Activated CD8-positive, alpha-beta memory T cell treated with anti-CD3 and anti-CD28 coated beads, Interleukin-2, amount 10 ng/mL, durations not matched to agents 7 days and 5 days (primary cell): ENCODE measurements at regions of chr11 and their contacts with region 1.

Region 1: DNA sequence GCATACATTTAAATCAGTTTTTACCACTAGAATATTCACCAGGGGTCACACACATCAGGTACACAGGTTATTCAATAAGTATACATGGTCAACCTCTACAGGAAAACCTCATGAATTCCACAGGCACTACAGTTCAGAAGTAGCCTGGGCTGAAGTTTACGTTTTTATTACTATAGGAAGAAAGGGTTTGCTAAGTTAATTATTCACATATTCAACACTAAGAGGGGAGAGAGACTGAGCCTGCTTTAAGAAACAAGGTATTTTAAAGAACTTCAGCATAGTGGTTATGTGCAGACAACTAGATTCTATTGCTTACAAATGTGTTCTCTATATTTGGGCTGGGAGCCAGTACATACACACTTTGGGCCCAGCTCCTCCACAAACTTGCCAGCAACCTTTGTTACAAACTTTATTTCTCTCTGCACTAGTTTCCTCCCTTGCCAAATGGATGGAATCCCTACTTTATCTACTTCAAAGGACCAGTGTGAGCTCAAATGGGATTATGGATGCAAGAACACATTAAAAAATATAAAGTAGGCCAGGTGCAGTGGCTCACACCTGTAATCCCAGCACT is 31.9 kb downstream of the IL18BP start:
- DNase-seq: no peak
- ATAC-seq: no peak
- H3K4me3 Mint-ChIP-seq: no peak overlapping the region
- H3K27ac Mint-ChIP-seq: no peak overlapping the region
- H3K4me1 Mint-ChIP-seq: peaks cover 11% of the 10 kb centered on the region
- H3K27me3 Mint-ChIP-seq: no peaks in the 10 kb centered on the region

Region 2: DNA sequence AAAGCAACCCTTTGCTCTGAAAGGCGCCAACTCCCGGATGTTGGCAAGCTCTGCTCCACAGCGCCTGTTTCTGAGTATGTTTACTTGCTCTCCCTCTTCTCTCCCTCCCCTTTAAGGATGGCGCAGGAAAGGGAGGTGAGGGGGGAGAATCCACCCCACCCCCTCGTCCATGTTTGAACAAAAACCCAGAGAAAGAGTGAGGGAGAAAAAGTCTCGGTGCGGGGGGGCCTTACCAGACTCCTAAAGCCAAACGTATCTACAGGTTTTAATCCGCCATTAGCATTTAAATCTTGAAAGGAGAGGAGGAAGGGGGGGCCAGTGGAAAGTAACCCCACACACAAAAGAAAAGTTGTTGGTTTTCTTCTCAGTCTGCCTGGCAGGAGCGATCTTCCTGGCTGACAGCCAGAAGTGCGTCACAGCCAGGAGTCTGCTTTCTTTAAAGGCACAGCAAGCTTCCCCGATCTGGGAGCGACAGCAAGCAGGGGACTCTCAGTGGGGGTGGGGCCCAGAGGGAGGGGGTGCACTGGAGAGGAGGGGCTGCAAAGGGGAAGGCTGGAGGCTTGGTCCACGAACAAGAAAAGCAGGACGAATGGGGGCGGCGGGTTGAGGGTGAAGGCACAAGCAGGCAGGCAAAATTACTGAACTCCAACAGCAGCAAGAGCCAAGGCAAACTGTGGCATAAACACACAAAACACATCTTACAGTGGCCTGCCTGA is 10.3 kb after region 1 on chr11:
- CTCF ChIA-PET with region 1: interaction called, 30 read pairs
- DNase-seq: peak; percentile 72
- ATAC-seq: peak; percentile 76
- H3K4me3 Mint-ChIP-seq: no peak overlapping the region
- H3K27ac Mint-ChIP-seq: no peak overlapping the region
- H3K4me1 Mint-ChIP-seq: peaks cover 11% of the 10 kb centered on the region
- H3K27me3 Mint-ChIP-seq: no peaks in the 10 kb centered on the region

Region 3: DNA sequence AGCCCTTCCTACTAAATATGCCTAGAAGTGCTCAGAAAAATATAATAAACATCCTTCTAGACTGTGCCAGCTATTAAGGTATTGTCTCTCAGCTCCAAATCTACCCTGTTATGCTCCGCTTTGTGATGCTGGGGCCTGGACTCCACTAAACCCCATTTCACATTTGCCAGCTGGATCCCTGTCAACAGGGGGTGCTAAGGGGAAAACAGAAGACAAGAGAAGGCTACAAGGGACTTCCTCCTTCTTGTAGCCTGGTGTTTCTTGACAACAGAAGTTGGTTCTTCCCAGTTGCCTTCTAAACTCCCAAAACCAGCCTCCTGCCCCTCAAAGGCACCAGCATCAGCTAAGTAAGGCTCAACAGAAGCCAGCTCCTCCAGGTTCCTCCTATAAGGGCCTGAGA is 44.5 kb after region 1 on chr11:
- CTCF ChIA-PET with region 1: interaction called, 11 read pairs
- DNase-seq: no peak
- ATAC-seq: no peak
- H3K4me3 Mint-ChIP-seq: no peak overlapping the region
- H3K27ac Mint-ChIP-seq: no peak overlapping the region
- H3K4me1 Mint-ChIP-seq: peaks cover 53% of the 10 kb centered on the region
- H3K27me3 Mint-ChIP-seq: no peaks in the 10 kb centered on the region